ENCODE measurements at regions of chr2 and their contacts with region 1.

Region 1: GRCh38 chr2:61538200-61538919 is at the start of gene XPO1:
- DNase-seq: peak; percentile 100
- H3K4me3 Mint-ChIP-seq: peak within 1 kb of the TSS; percentile 90
- H3K27ac Mint-ChIP-seq: peak within 1 kb of the TSS; percentile 97
- H3K4me1 Mint-ChIP-seq: peaks cover 27% of the 10 kb centered on the region
- H3K27me3 Mint-ChIP-seq: no peaks in the 10 kb centered on the region
- total RNA-seq, gene XPO1: 201 to 203 TPM

Region 2: GRCh38 chr2:60881047-60881932 is 657.1 kb before region 1 on chr2 and contains the start of gene REL:
- CTCF ChIA-PET with region 1: no interaction called
- intact Hi-C with region 1: loop called (anchors 2 kb)
- DNase-seq: peak; percentile 94
- H3K4me3 Mint-ChIP-seq: peak within 1 kb of the TSS; percentile 100
- H3K27ac Mint-ChIP-seq: peak within 1 kb of the TSS; percentile 98
- H3K4me1 Mint-ChIP-seq: peaks cover 21% of the 10 kb centered on the region
- H3K27me3 Mint-ChIP-seq: no peaks in the 10 kb centered on the region
- total RNA-seq, gene REL: 40.3 to 40.5 TPM

Region 3: DNA sequence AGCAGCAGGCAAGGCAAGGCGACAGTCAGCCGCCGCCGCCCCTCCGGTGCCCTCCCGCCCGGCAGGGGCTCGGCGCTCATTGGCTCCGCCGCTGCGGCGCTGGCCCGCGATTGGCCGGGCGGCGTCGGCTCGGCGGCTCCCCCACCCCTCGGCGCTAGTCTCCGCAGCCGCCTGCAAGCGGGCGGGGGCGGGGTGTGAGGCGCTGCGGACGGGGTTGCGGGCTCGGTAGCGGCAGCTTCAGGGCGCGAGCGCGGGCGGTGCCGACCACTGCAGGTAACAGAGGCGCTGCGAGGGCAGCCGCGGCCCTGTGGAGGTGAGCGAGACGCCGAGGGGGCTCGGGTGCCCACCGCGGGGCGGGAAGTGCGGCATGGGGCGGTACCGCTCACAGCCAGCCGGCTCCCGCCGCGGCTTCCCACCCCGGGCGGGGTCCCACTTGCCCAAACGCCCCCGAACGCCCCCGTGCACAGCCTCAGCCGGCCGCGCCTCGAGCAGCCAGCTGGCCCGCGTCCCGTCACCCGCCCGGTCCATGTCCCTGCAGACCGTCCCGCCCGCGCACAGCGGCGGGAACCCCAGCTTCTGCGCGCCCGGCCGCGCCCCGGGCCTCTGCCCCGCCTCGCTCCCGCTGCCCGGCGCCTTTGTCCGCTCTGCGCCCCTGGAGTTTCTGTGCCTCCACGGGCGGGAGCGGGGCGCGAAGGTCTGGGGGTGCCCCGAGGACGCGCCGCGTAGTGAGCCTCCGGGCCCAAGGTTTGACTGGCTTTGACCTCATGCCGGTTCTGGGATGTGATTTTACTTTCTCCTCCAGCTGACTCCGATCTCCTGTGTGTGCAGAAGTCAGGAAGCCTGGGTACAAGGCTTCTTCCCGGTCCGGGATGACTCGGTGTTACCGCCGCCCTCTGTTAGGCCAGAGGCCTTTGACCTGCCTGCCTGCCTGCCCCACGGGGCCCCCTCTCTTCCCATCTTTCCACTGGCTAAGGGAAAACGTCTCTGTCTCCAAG is 472.3 kb before region 1 on chr2 and contains the start of gene SANBR:
- CTCF ChIA-PET with region 1: no interaction called
- intact Hi-C with region 1: loop called (anchors 1 kb)
- DNase-seq: peak; percentile 83
- H3K4me3 Mint-ChIP-seq: peak within 1 kb of the TSS; percentile 84
- H3K27ac Mint-ChIP-seq: no peak within 1 kb of the TSS
- H3K4me1 Mint-ChIP-seq: peaks cover 8% of the 10 kb centered on the region
- H3K27me3 Mint-ChIP-seq: no peaks in the 10 kb centered on the region
- total RNA-seq, gene SANBR: 1.9 to 2.1 TPM

Region 4: DNA sequence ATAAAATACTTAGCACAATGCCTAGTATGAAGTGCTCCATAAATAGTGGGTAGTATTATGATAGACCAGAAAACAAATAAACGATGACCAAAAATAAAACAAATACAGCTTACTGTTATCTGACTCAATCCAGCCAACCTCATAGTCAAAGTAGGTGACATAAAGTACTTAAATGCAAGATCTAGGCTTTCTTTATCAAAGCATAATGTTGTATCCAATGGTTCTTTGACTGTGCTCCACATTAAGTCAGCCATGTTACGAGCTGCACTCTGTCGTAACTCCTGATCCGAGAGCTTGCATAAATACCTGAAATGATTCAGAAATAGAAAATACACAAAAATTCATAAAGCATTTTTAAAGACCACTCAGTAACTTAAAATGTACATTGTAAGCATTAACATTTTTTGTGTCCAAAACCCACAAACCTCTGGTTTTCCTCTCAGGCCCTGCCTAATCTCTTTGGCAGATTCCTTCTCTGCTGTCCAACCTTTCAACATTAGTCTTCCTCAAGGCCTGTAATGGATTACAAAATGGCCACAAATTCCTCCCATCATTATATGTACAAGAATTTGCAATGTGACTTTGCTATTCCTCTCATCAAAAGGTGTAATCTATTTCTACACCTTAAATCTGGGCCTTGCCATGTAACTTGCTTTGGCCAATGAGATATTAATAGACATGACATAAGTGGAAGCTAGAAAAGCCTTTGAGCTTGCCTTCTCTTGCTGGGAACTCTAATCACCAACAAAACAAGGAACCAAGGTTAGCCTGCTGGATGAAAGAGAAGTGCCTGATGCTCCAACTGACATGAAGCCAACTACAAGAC is 158.1 kb before region 1 on chr2:
- CTCF ChIA-PET with region 1: no interaction called
- intact Hi-C with region 1: no loop called
- DNase-seq: no peak
- H3K4me3 Mint-ChIP-seq: no peak overlapping the region
- H3K27ac Mint-ChIP-seq: no peak overlapping the region
- H3K4me1 Mint-ChIP-seq: no peaks in the 10 kb centered on the region
- H3K27me3 Mint-ChIP-seq: no peaks in the 10 kb centered on the region

Region 5: DNA sequence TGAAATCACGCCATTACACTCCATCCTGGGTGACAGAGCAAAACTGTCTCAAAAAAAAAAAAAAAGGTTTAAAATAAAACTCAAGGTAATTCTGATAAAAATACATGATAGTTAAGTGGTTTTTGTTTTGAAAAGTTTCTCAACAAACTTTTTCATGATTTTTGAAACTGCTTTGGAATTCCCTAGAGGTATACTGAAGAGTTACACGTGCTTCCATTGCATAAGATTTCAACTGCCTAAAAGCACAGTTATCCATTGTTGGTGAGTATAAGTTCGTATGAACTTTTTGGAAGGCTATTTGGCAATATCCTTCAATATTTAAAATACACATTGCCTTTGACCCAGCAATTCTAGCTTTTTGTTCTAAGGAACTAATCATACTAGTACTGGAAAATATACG is 142.4 kb before region 1 on chr2:
- CTCF ChIA-PET with region 1: no interaction called
- intact Hi-C with region 1: no loop called
- DNase-seq: no peak
- H3K4me3 Mint-ChIP-seq: no peak overlapping the region
- H3K27ac Mint-ChIP-seq: no peak overlapping the region
- H3K4me1 Mint-ChIP-seq: no peaks in the 10 kb centered on the region
- H3K27me3 Mint-ChIP-seq: no peaks in the 10 kb centered on the region

Region 6: DNA sequence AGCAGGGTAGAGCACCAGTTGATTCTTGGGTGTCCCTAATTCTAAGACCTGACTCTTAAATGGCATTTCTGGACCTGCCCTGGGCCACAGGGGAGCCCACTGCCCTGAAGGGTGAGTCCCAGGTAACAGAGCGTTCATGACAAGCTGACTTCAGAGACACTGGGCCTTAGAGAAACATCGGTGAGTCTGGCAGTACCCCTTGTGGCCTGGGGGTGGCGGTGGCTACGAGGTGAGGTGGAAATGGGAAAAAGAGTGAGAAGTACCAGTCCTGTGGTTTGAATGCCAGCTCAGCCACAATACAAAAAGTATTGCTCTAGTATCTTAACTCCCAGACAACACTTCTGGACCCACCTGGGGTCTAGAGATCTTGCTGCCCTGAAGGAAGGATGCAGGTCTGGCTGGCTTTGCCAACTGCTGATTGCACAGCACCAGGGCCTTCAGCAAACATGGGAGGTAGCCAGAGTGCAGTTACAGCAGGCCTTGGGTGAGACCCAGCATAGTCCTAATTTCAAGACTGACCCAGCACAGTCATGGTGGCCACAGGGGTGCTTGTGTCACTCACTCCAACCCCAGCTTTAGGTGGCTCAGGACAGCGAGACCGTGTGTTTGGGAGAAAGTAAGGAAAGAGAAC is 112.0 kb before region 1 on chr2:
- CTCF ChIA-PET with region 1: interaction called, 7 read pairs
- intact Hi-C with region 1: loop called (anchors 1 kb)
- DNase-seq: peak; percentile 87
- H3K4me3 Mint-ChIP-seq: no peak overlapping the region
- H3K27ac Mint-ChIP-seq: peak overlapping the region; percentile 84
- H3K4me1 Mint-ChIP-seq: peaks cover 62% of the 10 kb centered on the region
- H3K27me3 Mint-ChIP-seq: no peaks in the 10 kb centered on the region

Region 7: GRCh38 chr2:61633250-61633649 is 94.9 kb after region 1 on chr2:
- CTCF ChIA-PET with region 1: interaction called, 5 read pairs
- intact Hi-C with region 1: loop called (anchors 5 kb)
- DNase-seq: no peak
- H3K4me3 Mint-ChIP-seq: no peak overlapping the region
- H3K27ac Mint-ChIP-seq: no peak overlapping the region
- H3K4me1 Mint-ChIP-seq: no peaks in the 10 kb centered on the region
- H3K27me3 Mint-ChIP-seq: no peaks in the 10 kb centered on the region

Region 8: DNA sequence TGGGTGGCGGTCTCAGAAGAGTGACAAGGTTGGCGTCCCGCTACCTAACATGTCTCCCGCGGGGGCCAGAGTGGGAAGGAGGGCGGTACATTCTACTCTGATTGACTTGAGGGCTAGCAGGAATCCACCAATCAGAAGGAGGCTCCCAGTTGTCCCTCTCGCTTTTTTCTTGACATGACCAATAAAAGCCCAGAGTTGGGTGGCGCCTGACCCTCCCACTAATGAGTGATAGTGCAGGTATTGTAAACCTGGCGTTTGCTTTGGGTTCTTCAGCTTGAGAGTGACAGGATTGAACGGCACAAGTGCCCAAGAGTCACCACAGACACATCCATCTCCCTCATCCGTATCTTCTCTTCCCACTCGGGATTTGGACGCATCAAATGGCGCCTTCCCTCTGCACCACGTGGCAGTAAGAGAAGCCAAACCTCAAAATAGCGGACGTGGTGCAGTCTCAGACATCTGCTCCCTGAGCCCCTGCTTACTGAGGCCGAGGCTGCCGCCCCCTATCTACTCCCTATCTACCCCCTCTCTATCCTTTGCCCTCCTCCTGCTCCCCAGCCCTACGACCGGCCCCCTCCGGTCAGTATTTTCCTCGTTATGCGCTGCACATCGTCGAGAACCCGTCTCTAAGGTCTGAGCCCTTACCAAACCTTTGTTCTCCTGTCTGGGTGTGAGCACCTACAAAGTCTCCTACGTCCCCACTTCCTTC is 316.3 kb after region 1 on chr2:
- CTCF ChIA-PET with region 1: no interaction called
- intact Hi-C with region 1: loop called (anchors 1 kb)
- DNase-seq: peak; percentile 95
- H3K4me3 Mint-ChIP-seq: peak overlapping the region; percentile 93
- H3K27ac Mint-ChIP-seq: peak overlapping the region; percentile 91
- H3K4me1 Mint-ChIP-seq: peaks cover 17% of the 10 kb centered on the region
- H3K27me3 Mint-ChIP-seq: no peaks in the 10 kb centered on the region

Region 9: DNA sequence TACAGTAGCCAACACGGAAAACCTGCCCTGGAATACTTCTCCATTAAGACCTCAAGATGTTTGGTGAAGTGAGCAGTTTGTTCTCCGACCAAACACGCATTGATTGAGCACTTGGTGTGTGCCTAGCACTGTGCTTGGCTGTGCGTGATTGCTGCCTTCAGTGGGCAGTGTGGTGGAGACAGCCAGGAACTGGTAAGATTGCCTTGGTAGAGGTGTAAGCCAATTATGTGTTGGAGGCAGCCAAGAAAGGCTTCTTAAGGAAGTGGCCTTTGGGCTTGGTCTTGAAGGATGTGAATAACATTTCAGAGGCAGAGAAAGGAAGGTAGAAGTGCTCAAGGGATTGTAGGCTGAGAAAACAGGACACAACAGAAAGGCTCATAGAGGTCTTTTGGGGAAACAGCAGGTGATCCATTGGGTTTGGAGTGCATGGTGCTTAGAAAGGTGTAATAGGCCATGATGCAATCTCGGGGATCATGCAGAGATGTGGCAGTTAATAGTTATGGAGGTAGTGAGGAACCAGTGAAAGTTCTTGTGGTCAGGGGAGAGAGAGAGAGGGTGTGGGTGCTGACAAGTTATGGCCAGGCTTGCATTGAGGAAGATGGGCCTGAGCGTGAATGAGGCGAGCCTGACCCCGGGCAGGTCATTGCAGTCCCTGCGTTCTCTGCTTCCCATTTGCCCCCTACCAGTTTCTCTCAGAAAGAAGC is 663.8 kb after region 1 on chr2:
- CTCF ChIA-PET with region 1: no interaction called
- intact Hi-C with region 1: loop called (anchors 1 kb)
- DNase-seq: peak; percentile 35
- H3K4me3 Mint-ChIP-seq: peak overlapping the region; percentile 17
- H3K27ac Mint-ChIP-seq: peak overlapping the region; percentile 97
- H3K4me1 Mint-ChIP-seq: peaks cover 79% of the 10 kb centered on the region
- H3K27me3 Mint-ChIP-seq: no peaks in the 10 kb centered on the region

Region 10: GRCh38 chr2:62467475-62468321 is 929.3 kb after region 1 on chr2:
- CTCF ChIA-PET with region 1: no interaction called
- intact Hi-C with region 1: no loop called
- DNase-seq: no peak
- H3K4me3 Mint-ChIP-seq: no peak overlapping the region
- H3K27ac Mint-ChIP-seq: no peak overlapping the region
- H3K4me1 Mint-ChIP-seq: no peaks in the 10 kb centered on the region
- H3K27me3 Mint-ChIP-seq: no peaks in the 10 kb centered on the region

Measured in activated naive CD4-positive, alpha-beta T cell treated with anti-CD3 and anti-CD28 coated beads for 36 hours (primary cell).